ENCODE measurements at regions of chr11 and their contacts with region 1.

Region 1: DNA sequence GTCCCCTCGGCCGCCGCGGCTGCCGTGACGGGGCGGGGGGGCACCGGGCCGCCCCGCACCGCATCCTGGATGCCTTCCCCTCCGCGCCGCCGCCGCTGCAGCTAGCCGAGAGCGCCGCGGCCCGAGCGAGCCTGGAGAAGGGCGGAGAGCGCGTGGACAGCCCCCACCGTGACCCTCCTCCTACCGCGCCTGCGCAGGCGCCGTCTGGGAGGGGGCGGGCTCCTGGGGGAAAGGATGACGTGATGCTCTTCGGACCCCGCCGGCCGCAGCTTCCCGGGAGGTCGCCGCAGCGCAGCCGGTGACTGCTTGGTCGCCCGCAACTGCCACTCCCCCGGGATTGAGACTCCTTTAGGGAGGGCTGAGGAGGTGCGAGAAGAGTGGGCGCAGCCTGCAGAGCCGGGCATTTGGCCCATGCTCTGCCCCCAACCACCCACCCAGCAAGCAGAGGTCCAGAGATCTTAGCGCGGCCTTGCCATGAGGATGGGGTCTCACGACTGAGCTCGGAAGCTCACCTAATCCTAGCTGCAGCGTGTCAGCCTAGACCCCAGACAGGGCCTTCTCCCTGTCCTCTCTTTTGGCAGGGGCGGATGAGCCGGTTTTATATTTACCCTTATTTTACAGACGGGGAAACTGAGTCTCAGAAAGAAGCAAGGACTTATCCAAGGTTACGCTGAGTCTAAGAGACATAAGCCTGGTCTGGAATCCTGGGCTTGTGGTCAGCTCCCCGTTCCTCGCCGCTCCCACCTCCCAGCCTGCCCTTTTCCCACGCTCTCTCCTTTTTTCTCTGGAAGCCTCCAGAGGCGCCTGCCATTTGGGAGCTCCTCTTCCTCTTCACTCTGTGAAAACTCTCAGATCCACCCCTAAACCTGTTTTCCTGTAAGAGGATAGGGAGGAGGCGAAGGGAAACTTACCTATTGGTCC is at the start of gene DENND5A:
- DNase-seq: no peak
- ATAC-seq: peak; percentile 67
- H3K4me3 Mint-ChIP-seq: peak within 1 kb of the TSS; percentile 93
- H3K27ac Mint-ChIP-seq: peak within 1 kb of the TSS; percentile 90
- H3K4me1 Mint-ChIP-seq: peaks cover 27% of the 10 kb centered on the region
- H3K27me3 Mint-ChIP-seq: peaks cover 14% of the 10 kb centered on the region
- total RNA-seq, gene DENND5A: 74.3 to 75.2 TPM

Region 2: DNA sequence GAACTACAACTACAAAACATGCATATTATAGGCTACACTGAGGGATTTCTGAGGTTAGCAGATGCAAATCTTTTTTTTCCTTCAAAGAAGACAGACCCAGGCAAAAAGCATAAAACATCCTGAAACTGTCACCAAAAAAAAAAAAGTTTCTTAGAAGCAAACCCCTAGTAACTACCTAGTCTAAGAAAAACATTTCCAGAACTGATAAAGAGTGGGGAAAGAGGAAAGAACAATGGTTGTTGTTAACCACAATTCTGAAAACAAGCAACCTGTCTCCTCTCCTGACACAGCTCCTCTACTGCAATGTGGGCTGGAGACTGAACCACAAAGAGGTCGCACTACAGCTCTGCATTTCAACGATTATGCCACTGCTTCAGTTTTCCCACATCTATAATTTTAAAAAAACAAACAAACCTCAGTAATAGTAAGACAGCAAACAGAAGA is 15.3 kb before region 1 on chr11:
- POLR2A ChIA-PET with region 1: interaction called, 11 read pairs
- DNase-seq: no peak
- ATAC-seq: peak; percentile 85
- H3K4me3 Mint-ChIP-seq: peak overlapping the region; percentile 57
- H3K27ac Mint-ChIP-seq: peak overlapping the region; percentile 31
- H3K4me1 Mint-ChIP-seq: peaks cover 55% of the 10 kb centered on the region
- H3K27me3 Mint-ChIP-seq: no peaks in the 10 kb centered on the region

Region 3: DNA sequence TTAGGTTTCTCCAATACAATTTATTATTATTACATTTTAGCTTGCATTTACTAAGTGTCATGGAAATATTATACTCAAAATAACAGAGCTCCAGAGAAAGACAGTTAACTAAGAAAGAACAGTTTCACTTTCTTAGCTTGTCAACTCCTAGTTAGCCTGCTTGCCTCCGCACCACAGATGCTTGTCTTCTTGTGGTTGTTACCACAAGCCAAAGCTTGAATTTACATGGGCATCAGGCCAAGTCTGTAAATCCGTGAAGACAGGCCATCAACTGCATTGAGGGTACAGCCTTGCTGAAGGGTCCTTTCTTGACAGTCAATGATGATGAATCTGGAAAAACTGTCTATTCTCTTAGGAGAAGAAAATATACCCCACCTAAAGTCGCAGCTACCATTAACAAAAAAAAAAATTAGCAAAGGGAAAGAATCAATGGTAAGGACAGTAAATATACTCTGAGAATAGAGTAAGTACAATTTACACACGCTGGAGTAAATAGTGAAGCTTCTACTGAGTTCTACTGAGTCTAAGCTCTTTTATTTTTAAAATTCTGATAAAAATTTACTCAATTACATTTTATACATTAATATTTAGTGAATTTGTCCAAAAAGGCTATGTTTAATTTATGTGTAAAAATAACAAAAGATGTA is 15.3 kb after region 1 on chr11:
- POLR2A ChIA-PET with region 1: interaction called, 12 read pairs
- DNase-seq: peak; percentile 44
- ATAC-seq: peak; percentile 95
- H3K4me3 Mint-ChIP-seq: peak overlapping the region; percentile 72
- H3K27ac Mint-ChIP-seq: peak overlapping the region; percentile 76
- H3K4me1 Mint-ChIP-seq: peaks cover 15% of the 10 kb centered on the region
- H3K27me3 Mint-ChIP-seq: no peaks in the 10 kb centered on the region

Measured in activated naive CD8-positive, alpha-beta T cell treated with anti-CD3 and anti-CD28 coated beads, Interleukin-2, amount 10 ng/mL, durations not matched to agents 7 days and 5 days (primary cell).